Activated CD4-positive, alpha-beta T cell treated with anti-CD3 and anti-CD28 coated beads for 36 hours (primary cell): ENCODE measurements at regions of chrX and their contacts with region 1.

Region 1: GRCh38 chrX:70174754-70175153 is 2.5 kb upstream of the DGAT2L6 start:
- DNase-seq: no peak
- ATAC-seq: no peak
- H3K4me3 Mint-ChIP-seq: no peak overlapping the region
- H3K27ac Mint-ChIP-seq: no peak overlapping the region
- H3K4me1 Mint-ChIP-seq: peaks cover 10% of the 10 kb centered on the region
- H3K27me3 Mint-ChIP-seq: peaks cover 3% of the 10 kb centered on the region

Region 2: DNA sequence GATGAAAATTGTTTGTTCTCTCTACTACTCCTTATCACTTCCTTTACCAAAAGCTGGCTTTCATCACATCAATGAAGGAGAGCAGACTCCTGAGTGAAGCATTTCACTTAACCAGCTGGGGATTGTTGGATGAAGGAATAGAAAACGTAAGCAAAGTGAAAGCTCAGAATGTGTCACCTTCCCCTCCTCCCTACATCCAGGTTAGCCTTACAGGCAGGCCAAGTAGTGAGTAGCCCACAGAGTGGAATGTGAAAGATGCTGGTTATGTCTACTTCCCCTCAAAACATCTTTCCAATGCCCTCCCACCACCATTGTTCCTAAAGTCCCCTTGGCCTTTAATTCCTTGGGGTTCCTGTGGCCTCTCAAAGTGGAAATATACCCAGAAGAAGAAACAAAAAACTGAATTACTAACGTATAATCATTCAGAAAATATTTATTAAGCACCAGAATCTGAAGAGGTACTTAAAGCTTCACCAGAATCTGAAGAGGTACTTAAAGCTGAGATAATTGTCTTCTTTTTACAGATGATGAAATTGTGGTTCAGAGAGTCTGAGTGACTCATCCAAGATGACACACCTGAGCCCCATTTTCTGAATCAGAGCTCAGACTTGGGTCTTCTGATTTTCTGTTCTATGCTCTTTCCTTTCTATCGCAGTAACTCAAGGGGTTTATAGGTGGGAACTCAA is 78.8 kb after region 1 on chrX:
- CTCF ChIA-PET with region 1: no interaction called
- POLR2A ChIA-PET with region 1: no interaction called
- intact Hi-C with region 1: loop called in 1 of 2 experiments (anchors 1 kb)
- DNase-seq: peak; percentile 13
- ATAC-seq: peak; percentile 85
- H3K4me3 Mint-ChIP-seq: no peak overlapping the region
- H3K27ac Mint-ChIP-seq: peak overlapping the region; percentile 92
- H3K4me1 Mint-ChIP-seq: peaks cover 25% of the 10 kb centered on the region
- H3K27me3 Mint-ChIP-seq: no peaks in the 10 kb centered on the region